Heart right ventricle (tissue), 16 donors: ENCODE measurements at regions of chr9 and their contacts with region 1.

Region 1: DNA sequence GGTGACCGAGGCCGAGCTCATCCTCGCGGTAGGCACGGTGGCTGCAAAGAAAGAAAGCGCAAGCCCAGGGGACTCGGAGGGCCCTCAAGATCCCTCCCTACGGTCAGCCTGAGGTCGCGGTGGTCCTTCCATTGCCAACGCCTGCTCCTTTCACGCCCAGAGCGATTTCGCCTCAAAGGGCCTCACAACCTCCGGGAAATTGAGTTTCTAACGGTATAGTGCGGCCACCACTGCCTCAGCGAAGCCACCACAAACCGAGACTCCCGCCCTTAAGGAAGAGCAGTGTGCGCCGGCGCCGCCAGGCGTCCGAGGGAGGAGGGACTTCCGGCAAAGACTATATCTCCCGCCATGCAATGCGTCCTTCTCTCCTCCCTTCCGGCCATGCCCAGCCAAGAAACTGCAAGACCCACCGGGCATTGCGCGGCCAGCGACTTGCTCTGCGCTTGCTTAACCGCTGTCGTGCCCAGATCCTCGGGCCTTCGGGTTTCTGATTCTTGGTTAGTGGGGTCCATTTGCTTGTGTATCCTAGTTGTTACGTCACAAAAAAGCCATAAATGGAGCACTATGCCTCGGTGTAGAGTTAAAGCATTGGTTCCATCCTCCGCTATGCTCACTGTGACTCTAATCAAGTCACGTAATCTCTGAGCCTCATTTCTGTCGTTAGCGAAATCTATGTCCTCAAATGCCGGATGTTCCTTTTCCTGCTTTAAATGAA is at the start of gene HAUS6:
- DNase-seq: peak; percentile 95 to 97
- ATAC-seq: peak; percentile 99 to 100 (median 100)
- H3K4me3 ChIP-seq: peak within 1 kb of the TSS; percentile 64 to 91 (median 78)
- H3K27ac ChIP-seq: peak within 1 kb of the TSS; percentile 44 to 91 (median 90)
- H3K4me1 ChIP-seq: peaks cover 0 to 26% (median 17%) of the 10 kb centered on the region in 9 donors
- H3K27me3 ChIP-seq: no peaks in the 10 kb centered on the region
- CTCF ChIP-seq: peak; percentile 22 to 71 (median 50)
- total RNA-seq, gene HAUS6: 4.9 to 10.4 (median 7.2) TPM

Region 2: GRCh38 chr9:19161257-19162025 is 58.7 kb after region 1 on chr9:
- intact Hi-C with region 1: loop called in 2 of 10 experiments (anchors 5 to 10 kb)
- DNase-seq: no peak
- ATAC-seq: peak; percentile 33 to 94 (median 72)
- H3K4me3 ChIP-seq: peak overlapping the region in 1 of 10 donors; percentile 3
- H3K27ac ChIP-seq: peak overlapping the region in 6 of 10 donors; percentile 2 to 85 (median 49)
- H3K4me1 ChIP-seq: peaks cover 0 to 49% (median 11%) of the 10 kb centered on the region in 9 donors
- H3K27me3 ChIP-seq: no peaks in the 10 kb centered on the region
- CTCF ChIP-seq: no peak

Region 3: DNA sequence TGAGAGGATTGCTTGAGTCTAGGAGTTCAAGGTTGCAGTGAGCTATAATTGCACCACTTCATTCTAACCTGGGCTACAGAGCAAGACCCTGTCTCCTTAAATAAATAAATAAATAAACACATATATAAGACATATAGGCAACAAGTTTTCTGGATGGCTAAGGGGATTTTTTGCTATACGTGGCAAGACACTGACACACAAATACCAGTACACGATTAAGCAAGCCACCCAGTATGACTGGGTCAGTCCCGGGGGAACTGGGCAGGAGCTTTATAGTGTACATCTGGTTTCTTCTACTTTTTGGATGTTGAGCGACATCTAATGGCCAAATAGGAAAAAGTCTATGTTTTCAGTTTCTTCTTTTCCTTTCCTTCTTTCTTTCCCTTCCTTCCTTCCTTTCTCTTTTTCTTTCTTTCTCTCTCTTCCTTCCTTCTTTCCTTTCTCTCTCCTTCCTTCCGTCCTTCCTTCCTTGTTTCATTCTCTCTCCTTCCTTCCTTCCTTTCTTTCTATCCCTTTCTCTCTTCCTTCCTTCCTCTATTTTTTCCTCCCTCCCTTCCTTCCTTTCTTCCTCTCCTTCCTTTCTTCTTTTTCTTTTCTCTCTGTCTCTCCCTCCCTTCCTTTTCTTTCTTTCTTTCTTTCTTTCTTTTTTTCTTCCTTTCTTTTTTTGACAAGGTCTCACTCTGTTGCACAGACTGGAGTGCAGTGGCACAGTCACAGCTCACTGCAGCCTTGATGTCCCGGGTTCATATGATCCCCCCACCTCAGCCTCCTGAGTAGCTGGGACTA is 71.5 kb after region 1 on chr9:
- intact Hi-C with region 1: loop called in 4 of 10 experiments (anchors 2 to 10 kb)
- DNase-seq: peak; percentile 50 to 64
- ATAC-seq: peak; percentile 72 to 96 (median 86)
- H3K4me3 ChIP-seq: peak overlapping the region in 2 of 10 donors; percentile 2 to 7
- H3K27ac ChIP-seq: peak overlapping the region in 1 of 10 donors; percentile 46
- H3K4me1 ChIP-seq: peaks cover 0 to 30% (median 11%) of the 10 kb centered on the region in 9 donors
- H3K27me3 ChIP-seq: no peaks in the 10 kb centered on the region
- CTCF ChIP-seq: peak; percentile 27 to 80 (median 71)

Region 4: DNA sequence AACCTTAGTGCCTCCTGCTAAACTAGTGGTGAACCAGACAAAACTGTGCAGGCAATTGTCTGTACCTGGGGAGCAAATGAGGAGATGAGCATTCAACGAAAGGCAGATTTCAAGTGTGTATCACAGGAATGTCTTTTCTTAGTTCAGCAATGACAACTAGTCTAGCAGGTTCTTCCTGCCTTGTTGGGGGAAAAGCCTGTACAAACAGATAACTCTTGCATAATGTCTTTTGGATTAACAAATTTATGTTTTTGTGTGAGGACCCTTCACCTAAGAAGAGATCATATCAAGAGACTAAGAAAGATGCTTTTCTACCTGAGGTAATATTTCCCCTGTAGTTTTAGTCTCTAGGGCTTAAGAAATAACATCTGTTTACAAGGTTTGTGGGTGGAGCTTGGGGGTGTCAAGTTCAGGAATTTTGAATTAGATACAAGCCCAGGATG is 105.9 kb after region 1 on chr9:
- intact Hi-C with region 1: no loop called
- DNase-seq: no peak
- ATAC-seq: no peak
- H3K4me3 ChIP-seq: no peak overlapping the region
- H3K27ac ChIP-seq: no peak overlapping the region
- H3K4me1 ChIP-seq: no peaks in the 10 kb centered on the region
- H3K27me3 ChIP-seq: no peaks in the 10 kb centered on the region
- CTCF ChIP-seq: no peak